Adrenal gland (tissue), 19 donors: ENCODE measurements at regions of chr5 and their contacts with region 1.

Region 1: GRCh38 chr5:76601470-76601869 is 21.7 kb downstream of the F2RL2 start:
- DNase-seq: peak in 4 of 7 donors; percentile 27 to 47 (median 38)
- H3K4me3 ChIP-seq: no peak overlapping the region
- H3K27ac ChIP-seq: no peak overlapping the region
- H3K4me1 ChIP-seq: no peaks in the 10 kb centered on the region
- H3K27me3 ChIP-seq: no peaks in the 10 kb centered on the region
- CTCF ChIP-seq: peak; percentile 70 to 89 (median 78)
- POLR2A ChIP-seq: no peak

Region 2: GRCh38 chr5:76451031-76451701 is 150.3 kb before region 1 on chr5:
- intact Hi-C with region 1: no loop called
- DNase-seq: no peak
- H3K4me3 ChIP-seq: no peak overlapping the region
- H3K27ac ChIP-seq: no peak overlapping the region
- H3K4me1 ChIP-seq: peaks cover 7 to 9% of the 10 kb centered on the region in 2 donors
- H3K27me3 ChIP-seq: no peaks in the 10 kb centered on the region
- CTCF ChIP-seq: no peak
- POLR2A ChIP-seq: no peak

Region 3: GRCh38 chr5:76641514-76642120 is 40.1 kb after region 1 on chr5:
- intact Hi-C with region 1: loop called in 1 of 2 experiments (anchors 5 kb)
- DNase-seq: peak; percentile 35 to 82 (median 66)
- H3K4me3 ChIP-seq: no peak overlapping the region
- H3K27ac ChIP-seq: no peak overlapping the region
- H3K4me1 ChIP-seq: peaks cover 0 to 10% of the 10 kb centered on the region in 2 donors
- H3K27me3 ChIP-seq: no peaks in the 10 kb centered on the region
- CTCF ChIP-seq: peak; percentile 60 to 76 (median 67)
- POLR2A ChIP-seq: no peak